Activated CD4-positive, alpha-beta memory T cell treated with anti-CD3 and anti-CD28 coated beads, Interleukin-2, amount 10 ng/mL, durations not matched to agents 7 days and 5 days (primary cell): ENCODE measurements at regions of chr9 and their contacts with region 1.

Region 1: DNA sequence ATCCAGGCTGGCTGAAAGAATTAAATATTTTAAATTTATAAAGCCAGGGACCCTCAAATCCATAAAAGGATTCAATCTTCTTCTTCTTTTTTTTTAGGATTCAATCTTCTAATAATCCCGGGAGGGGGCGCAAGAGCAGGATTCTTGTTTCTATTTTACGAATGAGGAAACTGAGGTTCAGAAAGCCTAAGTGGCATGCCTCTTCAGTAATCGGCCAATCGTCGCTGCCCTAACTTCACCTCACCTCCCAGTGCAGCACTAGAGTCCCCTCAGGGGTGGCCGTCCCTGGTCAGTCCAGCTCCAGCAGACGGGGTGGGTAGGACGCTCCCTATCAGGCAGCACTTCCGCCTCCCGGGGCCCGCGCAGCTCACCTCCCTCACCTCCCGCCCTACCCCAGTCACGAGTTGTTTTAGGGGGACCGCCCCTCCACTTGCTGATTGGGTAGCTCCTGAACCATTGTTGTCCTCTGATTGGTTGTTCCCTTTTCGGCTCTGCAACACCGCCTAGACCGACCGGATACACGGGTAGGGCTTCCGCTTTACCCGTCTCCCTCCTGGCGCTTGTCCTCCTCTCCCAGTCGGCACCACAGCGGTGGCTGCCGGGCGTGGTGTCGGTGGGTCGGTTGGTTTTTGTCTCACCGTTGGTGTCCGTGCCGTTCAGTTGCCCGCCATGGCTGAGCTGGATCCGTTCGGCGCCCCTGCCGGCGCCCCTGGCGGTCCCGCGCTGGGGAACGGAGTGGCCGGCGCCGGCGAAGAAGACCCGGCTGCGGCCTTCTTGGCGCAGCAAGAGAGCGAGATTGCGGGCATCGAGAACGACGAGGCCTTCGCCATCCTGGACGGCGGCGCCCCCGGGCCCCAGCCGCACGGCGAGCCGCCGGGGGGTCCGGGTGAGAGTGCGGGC is at the start of gene CLTA:
- DNase-seq: peak; percentile 96
- H3K4me3 Mint-ChIP-seq: peak within 1 kb of the TSS; percentile 82
- H3K27ac Mint-ChIP-seq: peak within 1 kb of the TSS; percentile 77
- H3K4me1 Mint-ChIP-seq: peaks cover 66% of the 10 kb centered on the region
- H3K27me3 Mint-ChIP-seq: peaks cover 7% of the 10 kb centered on the region
- total RNA-seq, gene CLTA: 150 to 151 TPM

Region 2: GRCh38 chr9:36056896-36057295 is 133.7 kb before region 1 on chr9:
- CTCF ChIA-PET with region 1: no interaction called
- POLR2A ChIA-PET with region 1: no interaction called
- DNase-seq: no peak
- H3K4me3 Mint-ChIP-seq: no peak overlapping the region
- H3K27ac Mint-ChIP-seq: no peak overlapping the region
- H3K4me1 Mint-ChIP-seq: no peaks in the 10 kb centered on the region
- H3K27me3 Mint-ChIP-seq: no peaks in the 10 kb centered on the region

Region 3: DNA sequence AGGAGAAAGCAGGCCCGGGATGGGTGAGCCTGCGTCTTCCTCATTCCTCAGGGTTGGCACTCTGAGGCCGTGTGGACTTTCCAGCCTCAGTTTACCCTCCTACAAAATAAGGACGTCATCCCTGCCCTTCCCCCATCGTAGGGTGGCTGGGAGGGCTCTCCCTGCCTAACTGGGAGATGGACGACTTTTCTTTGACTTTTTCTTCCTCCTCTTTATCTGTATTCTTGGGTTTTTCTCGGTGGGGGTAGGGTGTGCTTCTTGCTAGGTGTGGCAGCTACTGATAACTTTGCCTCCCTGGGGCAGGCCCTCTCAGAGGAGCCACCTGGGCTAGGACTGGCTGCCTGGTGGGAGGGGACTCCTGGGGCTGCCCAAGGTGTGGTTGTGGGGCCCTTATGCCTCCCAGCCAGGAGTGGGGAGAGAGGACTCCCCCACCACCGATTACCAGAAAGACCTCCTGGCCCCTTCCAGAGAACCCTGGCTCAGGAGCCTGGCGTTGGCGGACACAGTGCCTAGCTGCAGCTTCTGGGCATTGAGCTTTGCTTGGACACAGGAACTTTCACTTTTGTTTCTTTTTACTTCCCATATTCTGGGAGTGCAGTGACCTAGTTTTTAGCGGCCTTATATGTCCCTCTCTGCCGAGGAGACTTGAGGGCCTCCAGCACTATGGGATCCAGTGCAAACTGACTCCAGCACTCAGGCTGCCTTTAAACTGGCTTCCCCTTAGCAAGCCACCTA is 48.0 kb before region 1 on chr9:
- CTCF ChIA-PET with region 1: interaction called, 15 read pairs
- POLR2A ChIA-PET with region 1: interaction called, 31 read pairs
- DNase-seq: no peak
- H3K4me3 Mint-ChIP-seq: peak overlapping the region; percentile 85
- H3K27ac Mint-ChIP-seq: peak overlapping the region; percentile 96
- H3K4me1 Mint-ChIP-seq: peaks cover 97% of the 10 kb centered on the region
- H3K27me3 Mint-ChIP-seq: peaks cover 3% of the 10 kb centered on the region

Region 4: DNA sequence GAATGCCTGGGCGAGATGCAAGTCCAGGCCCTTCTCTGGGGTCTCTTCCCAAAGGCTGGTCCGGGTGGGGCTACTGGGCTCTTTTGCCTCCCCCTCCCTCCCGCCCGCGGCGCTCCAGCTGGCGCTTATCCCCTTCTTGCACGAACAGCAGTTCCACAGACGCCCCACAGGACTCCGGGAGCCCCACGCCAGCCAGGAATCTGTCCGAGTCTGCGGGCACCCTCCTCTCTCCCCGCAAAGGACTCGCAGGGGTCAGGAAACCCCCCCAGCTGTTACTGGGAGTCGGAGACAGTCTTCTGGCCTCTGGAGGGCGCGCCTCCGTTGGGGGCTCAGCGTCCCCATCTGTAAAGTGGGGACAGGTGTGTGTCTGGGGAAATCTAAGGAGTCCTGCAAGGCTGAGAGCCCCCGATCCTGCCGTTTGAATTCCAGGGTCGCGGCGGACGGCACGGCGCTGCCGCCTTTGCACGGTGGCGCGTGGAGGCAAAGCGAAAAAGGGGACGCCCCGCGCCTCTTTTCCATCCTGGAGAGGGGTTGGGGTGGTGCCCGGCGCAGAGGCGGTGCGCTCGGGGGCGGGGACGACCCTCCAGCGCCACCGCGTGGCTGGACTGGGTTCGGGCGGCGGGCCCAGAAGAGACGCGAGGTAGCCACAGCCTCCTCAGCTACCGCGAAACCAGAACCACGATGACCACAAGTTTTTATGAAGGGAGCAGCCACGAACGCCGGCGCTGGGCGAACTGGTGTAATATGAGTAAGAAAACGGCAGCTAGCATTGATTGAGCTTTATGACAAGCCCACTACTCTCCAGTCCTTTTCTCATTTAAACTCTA is 24.3 kb before region 1 on chr9:
- CTCF ChIA-PET with region 1: interaction called, 33 read pairs
- POLR2A ChIA-PET with region 1: interaction called, 44 read pairs
- DNase-seq: peak; percentile 87
- H3K4me3 Mint-ChIP-seq: peak overlapping the region; percentile 66
- H3K27ac Mint-ChIP-seq: no peak overlapping the region
- H3K4me1 Mint-ChIP-seq: peaks cover 12% of the 10 kb centered on the region
- H3K27me3 Mint-ChIP-seq: peaks cover 14% of the 10 kb centered on the region

Region 5: GRCh38 chr9:36218411-36218901 is 27.8 kb after region 1 on chr9:
- CTCF ChIA-PET with region 1: interaction called, 14 read pairs
- POLR2A ChIA-PET with region 1: interaction called, 49 read pairs
- DNase-seq: peak; percentile 46
- H3K4me3 Mint-ChIP-seq: peak overlapping the region; percentile 26
- H3K27ac Mint-ChIP-seq: peak overlapping the region; percentile 79
- H3K4me1 Mint-ChIP-seq: peaks cover 58% of the 10 kb centered on the region
- H3K27me3 Mint-ChIP-seq: no peaks in the 10 kb centered on the region

Region 6: GRCh38 chr9:36328798-36329411 is 138.3 kb after region 1 on chr9:
- CTCF ChIA-PET with region 1: interaction called, 41 read pairs
- POLR2A ChIA-PET with region 1: interaction called, 15 read pairs
- DNase-seq: peak; percentile 38
- H3K4me3 Mint-ChIP-seq: no peak overlapping the region
- H3K27ac Mint-ChIP-seq: no peak overlapping the region
- H3K4me1 Mint-ChIP-seq: peaks cover 6% of the 10 kb centered on the region
- H3K27me3 Mint-ChIP-seq: no peaks in the 10 kb centered on the region

Region 7: DNA sequence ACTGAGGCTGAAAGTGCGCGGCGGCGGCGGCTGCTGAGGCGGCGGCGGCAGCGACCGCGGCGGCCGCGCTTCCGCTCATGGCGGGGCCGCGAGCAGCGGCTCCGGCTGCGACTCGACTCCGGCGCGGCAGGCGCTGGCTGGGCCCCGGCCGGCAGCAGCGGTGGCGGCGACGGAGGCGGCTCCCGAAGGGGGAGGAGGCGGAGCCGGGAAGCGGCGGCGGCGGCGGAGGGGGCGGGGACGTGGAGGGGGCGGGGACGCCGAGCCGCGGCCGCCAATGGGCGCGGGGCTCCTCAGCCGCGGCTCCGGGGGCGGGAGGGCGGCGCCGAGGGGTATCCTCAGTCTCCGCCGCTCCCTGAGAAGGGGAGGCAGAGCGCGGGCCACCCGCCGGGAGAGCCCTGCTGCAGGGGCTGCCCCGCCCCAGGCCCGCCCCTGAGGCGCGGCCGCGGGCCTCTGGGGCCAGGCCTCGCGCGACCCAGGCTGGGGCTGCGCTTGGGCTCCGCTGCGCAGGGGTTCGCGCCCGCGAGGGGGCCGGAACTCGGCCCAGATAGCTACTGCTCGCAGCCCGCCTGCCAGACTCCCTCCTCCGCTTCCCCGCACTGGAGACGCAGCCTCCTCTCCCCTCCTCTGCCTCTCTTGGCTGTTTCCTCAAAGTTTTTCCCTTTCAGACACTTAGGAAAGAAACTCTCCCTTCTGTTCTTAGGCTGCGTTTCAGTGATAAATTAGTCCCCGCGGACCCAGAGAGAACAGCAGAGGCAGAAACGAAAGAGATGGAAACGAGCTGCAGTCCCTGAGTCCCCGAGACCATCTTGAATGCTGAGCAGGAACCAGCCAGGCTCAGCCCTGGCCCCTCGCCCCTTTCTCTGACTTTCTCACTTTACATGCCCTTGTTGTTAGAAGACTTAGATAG is 297.1 kb after region 1 on chr9:
- CTCF ChIA-PET with region 1: interaction called, 3 read pairs
- POLR2A ChIA-PET with region 1: interaction called, 18 read pairs
- DNase-seq: peak; percentile 92
- H3K4me3 Mint-ChIP-seq: peak overlapping the region; percentile 85
- H3K27ac Mint-ChIP-seq: peak overlapping the region; percentile 98
- H3K4me1 Mint-ChIP-seq: peaks cover 51% of the 10 kb centered on the region
- H3K27me3 Mint-ChIP-seq: no peaks in the 10 kb centered on the region